Heart right ventricle (tissue), 16 donors: ENCODE measurements at regions of chr7 and their contacts with region 1.

Region 1: DNA sequence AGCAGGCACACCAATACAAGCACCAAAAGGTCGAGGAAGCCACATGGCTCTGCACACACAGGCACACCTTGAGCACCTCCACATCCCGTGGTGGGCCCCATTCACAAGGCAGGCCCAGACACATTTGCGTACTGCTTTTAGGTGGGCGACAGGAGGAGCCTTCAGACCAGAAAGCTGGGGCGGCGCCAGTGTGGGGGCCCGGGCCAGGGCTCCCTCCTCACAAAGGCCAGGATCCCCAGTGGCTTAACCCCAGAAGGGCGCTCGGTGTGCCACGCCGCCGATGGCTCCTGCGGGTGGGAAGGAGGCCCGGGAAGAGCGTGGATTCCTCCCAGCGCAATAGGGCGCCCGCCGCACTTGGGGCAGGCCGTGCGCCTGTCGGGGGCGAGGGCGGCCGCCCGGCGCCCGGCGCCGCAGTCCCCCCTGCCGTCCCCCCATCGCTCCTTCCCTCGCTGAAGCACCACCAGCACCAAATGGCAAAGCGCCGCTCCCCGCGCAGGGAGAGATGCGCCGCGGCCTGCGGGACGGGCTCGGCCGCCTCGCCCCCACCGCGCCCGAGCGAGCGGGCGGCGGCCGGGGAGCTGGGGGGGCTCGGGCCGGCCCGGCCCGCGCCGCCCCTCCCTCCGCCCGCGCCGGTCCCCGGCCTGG is 3.0 kb upstream of the SMARCD3 start:
- DNase-seq: peak; percentile 63 to 76
- ATAC-seq: peak in 2 of 8 donors; percentile 0 to 5
- H3K4me3 ChIP-seq: peak overlapping the region; percentile 26 to 86 (median 67)
- H3K27ac ChIP-seq: peak overlapping the region; percentile 80 to 98 (median 96)
- H3K4me1 ChIP-seq: peaks cover 10 to 79% (median 61%) of the 10 kb centered on the region in 9 donors
- H3K27me3 ChIP-seq: peaks cover 0 to 59% (median 0%) of the 10 kb centered on the region in 7 donors
- CTCF ChIP-seq: no peak

Region 2: GRCh38 chr7:151273651-151274390 is 22.4 kb after region 1 on chr7:
- intact Hi-C with region 1: loop called in 1 of 10 experiments (anchors 1 kb)
- DNase-seq: no peak
- ATAC-seq: no peak
- H3K4me3 ChIP-seq: no peak overlapping the region
- H3K27ac ChIP-seq: peak overlapping the region in 1 of 10 donors; percentile 18
- H3K4me1 ChIP-seq: peaks cover 0 to 43% (median 8%) of the 10 kb centered on the region in 9 donors
- H3K27me3 ChIP-seq: peaks cover 0 to 7% (median 0%) of the 10 kb centered on the region in 7 donors
- CTCF ChIP-seq: no peak

Region 3: GRCh38 chr7:151304856-151305255 is 53.4 kb after region 1 on chr7:
- intact Hi-C with region 1: loop called in 5 of 10 experiments (anchors 2 to 5 kb)
- DNase-seq: no peak
- ATAC-seq: no peak
- H3K4me3 ChIP-seq: peak overlapping the region in 2 of 10 donors; percentile 7 to 31
- H3K27ac ChIP-seq: no peak overlapping the region
- H3K4me1 ChIP-seq: peaks cover 3 to 17% (median 11%) of the 10 kb centered on the region in 9 donors
- H3K27me3 ChIP-seq: peaks cover 0 to 61% (median 39%) of the 10 kb centered on the region in 7 donors
- CTCF ChIP-seq: no peak